Tibial artery (tissue), 4 donors: ENCODE measurements at regions of chr1 and their contacts with region 1.

Region 1: GRCh38 chr1:153429266-153430165 is 13.2 kb downstream of the S100A7A start:
- DNase-seq: no peak
- H3K4me3 ChIP-seq: no peak overlapping the region
- H3K27ac ChIP-seq: no peak overlapping the region
- H3K4me1 ChIP-seq: no peaks in the 10 kb centered on the region
- H3K27me3 ChIP-seq: no peaks in the 10 kb centered on the region
- CTCF ChIP-seq: no peak

Region 2: DNA sequence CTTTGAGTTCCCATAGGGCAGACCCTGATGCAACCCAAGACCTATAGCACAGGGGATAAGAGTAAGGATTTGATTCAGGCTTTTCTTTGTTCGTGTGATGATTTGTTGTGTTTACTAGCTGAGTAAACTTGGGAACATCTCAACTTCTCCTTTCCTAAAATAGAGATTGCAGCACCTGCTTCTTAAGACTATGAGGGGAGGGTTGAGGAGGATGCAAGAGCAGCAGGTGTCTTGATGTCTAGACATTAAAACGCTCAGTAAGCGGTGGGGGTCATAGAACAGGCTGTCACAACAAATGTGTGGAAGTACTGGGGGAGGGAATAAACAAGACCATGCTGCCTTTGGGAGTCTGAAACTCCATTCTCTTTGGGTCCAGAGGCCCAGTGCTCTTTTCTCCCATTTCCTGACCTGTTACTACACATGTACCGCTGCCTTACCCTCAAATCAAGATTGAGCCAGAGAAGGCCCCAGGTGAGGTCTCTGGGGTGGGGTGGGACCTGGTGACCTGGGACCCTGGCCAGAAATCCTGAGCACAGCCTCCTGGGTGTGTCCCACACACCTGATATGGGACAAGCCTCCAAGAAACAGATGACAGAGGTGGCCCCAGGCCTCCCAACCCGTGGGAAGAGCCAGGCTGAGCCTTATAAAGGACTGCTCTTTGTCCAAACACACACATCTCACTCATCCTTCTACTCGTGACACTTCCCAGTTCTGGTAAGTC is 13.5 kb before region 1 on chr1 and contains the start of gene S100A7A:
- intact Hi-C with region 1: loop called (anchors 1 kb)
- DNase-seq: no peak
- H3K4me3 ChIP-seq: no peak within 1 kb of the TSS
- H3K27ac ChIP-seq: no peak within 1 kb of the TSS
- H3K4me1 ChIP-seq: no peaks in the 10 kb centered on the region
- H3K27me3 ChIP-seq: peaks cover 0 to 7% of the 10 kb centered on the region in 2 donors
- CTCF ChIP-seq: no peak